WTC11 (cell line): ENCODE measurements at regions of chr14 and their contacts with region 1.

Region 1: DNA sequence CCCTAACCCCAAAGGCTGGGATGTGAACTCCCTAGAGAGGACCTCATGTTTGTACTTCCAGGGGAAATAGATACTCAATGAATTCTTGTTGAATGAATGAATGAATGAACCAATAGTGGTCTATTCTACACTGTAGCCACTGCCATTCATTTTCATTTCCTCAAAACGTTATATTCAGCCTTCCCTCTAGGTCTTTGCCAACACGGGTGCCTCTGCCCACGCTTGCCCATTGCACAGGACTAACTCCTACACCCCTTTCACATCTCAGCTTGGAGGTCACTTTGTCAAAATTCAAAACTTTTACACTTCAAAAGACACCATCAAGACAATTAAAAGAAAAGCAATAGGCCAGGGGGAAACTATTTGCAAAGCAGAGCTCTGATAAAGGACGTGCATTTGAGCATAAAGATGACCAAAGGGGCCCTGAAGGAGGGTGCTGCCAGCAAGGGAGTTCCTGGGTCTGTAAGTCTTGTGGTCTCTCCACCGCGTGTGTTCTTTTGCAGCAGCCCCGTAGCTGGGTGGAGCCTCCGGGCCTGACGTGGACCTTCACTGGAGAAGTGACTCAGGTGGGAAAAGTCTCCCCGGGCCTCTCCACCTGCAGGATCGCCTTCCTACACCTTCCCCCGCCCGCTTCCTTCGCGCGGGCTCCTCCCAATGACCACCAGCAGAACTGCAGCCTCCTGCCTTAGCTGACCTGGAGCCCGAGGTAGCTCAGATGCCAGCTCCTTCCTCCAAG is 31.5 kb downstream of the TMEM63C start:
- DNase-seq: peak; percentile 87
- ATAC-seq: peak; percentile 98
- H3K4me3 Mint-ChIP-seq: no peak overlapping the region
- H3K27ac Mint-ChIP-seq: no peak overlapping the region
- H3K4me1 Mint-ChIP-seq: peaks cover 17% of the 10 kb centered on the region
- H3K27me3 Mint-ChIP-seq: peaks cover 3% of the 10 kb centered on the region; the same call in 1 of the 2 replicates
- CTCF ChIP-seq: peak; percentile 60; the same call in 1 of the 2 replicates

Region 2: DNA sequence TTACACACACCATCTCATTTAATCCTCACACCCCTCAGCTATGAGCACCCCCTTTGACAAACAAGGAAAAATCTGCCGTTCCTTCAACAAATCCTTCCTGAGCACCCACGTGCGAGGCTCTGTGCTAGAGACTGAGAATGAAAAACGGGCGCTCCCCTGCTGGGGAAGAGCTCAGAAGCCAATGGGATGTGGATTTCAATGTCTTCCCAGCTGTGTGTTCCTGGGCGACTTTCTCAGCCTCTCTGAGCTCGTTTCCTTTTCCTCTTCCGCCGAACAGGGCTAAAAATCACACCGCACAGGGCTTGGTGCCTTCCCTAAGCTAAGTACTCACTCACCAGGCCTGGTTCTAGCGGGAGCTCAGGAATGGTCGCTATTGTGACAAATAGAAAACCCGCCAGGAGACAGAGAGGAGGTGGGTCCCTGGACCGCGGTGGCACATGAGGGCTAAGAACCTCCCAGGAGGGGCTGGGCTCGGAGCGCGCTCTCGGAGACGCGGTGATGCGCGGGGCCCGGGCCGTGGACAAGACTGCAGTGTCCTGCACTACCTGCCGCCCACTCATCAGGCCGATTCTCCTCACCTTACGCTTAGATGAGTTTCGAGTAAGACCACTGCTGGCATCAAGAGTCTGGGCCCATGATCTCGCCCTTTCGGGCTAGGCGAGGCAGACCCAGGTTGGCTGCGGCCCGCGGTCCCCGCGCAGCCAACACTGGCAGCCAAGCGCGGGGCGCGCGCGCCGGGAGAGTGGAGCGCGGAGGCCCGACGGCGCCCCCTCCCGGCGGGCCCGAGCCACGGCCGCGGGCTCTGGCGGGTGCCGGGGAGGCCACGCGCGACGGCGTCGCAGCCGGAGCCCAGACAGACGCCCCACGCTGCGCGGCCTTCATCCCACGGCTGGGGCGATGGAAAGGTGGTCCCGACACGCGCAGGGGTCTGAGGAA is 88.5 kb before region 1 on chr14:
- CTCF ChIA-PET with region 1: interaction called, 24 read pairs
- POLR2A ChIA-PET with region 1: no interaction called
- DNase-seq: peak; percentile 54
- ATAC-seq: peak; percentile 43
- H3K4me3 Mint-ChIP-seq: peak overlapping the region; percentile 72
- H3K27ac Mint-ChIP-seq: no peak overlapping the region
- H3K4me1 Mint-ChIP-seq: peaks cover 62% of the 10 kb centered on the region
- H3K27me3 Mint-ChIP-seq: peaks cover 7% of the 10 kb centered on the region
- CTCF ChIP-seq: peak; percentile 63; the same call in 1 of the 2 replicates

Region 3: DNA sequence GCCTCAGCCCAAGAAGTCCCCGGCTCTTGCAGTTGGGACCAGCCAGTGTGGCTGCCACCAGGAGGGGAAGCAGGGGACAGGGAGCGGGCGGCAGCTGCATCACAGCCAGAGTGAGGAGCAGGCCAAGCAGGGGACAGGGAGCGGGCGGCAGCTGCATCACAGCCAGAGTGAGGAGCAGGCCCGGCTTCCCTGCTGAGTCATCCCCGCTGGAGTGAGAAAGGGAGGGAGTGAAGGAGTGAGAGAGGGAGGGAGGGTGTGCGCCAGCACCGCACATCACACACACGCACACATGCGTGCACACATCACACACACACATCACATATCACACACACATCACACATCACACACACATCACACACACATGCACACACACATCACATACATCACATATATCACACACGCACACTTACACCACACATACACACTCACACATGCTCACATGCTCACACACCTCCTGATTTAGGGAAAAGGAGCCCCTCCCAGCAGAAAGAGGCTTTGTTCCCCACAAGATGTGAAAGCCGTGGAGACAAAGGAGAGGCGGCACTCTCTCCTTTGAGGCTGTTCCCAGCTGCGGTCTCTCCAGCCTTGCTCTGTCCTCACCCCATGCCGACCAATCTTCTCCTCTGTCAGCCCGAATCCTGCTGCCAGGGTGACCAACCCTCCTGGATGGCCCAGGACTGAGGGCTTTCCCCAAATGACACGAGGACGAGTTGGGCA is 54.8 kb before region 1 on chr14:
- CTCF ChIA-PET with region 1: interaction called, 78 read pairs
- POLR2A ChIA-PET with region 1: no interaction called
- DNase-seq: peak; percentile 39
- ATAC-seq: peak; percentile 82
- H3K4me3 Mint-ChIP-seq: peak overlapping the region; percentile 34; the same call in 1 of the 2 replicates
- H3K27ac Mint-ChIP-seq: no peak overlapping the region
- H3K4me1 Mint-ChIP-seq: peaks cover 33% of the 10 kb centered on the region
- H3K27me3 Mint-ChIP-seq: no peaks in the 10 kb centered on the region
- CTCF ChIP-seq: no peak

Region 4: GRCh38 chr14:77186911-77187648 is 26.0 kb before region 1 on chr14:
- CTCF ChIA-PET with region 1: interaction called, 19 read pairs
- POLR2A ChIA-PET with region 1: interaction called, 3 read pairs
- DNase-seq: peak; percentile 35
- ATAC-seq: peak; percentile 60
- H3K4me3 Mint-ChIP-seq: no peak overlapping the region
- H3K27ac Mint-ChIP-seq: peak overlapping the region; percentile 57; the same call in 1 of the 2 replicates
- H3K4me1 Mint-ChIP-seq: peaks cover 9% of the 10 kb centered on the region
- H3K27me3 Mint-ChIP-seq: peaks cover 9% of the 10 kb centered on the region
- CTCF ChIP-seq: no peak

Region 5: DNA sequence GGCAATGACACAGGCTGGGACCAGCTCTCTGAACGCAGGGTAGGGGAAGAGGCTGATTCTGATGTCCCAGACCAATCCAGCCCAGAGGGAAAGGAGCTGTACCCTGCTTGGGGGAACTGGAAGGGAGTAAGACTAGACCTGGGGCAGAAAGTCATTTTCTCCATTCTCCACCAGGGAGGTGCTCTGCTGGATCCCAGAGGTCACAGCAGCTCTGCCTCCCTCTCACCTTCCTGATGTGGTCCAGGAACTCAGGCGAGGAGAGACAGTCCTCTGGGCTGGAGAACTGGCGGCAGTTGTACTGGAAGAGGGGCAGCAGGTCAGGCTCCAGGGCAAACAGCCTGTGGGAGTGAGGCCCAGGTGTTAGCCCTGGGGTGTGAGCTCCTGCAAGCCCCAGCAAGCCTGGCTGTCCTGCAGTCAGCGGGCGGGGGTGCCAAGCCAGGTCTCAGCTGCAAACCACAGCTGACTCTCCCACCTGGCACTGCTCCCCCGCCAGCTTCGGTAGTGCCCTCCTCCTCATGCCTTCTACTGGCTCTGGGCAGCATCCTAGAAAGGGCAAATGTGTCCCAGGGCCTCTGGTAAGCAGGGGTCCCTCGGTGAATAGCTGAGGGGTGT is 56.0 kb after region 1 on chr14:
- CTCF ChIA-PET with region 1: interaction called, 18 read pairs
- POLR2A ChIA-PET with region 1: no interaction called
- DNase-seq: no peak
- ATAC-seq: peak; percentile 31
- H3K4me3 Mint-ChIP-seq: no peak overlapping the region; the same call in 1 of the 2 replicates
- H3K27ac Mint-ChIP-seq: no peak overlapping the region
- H3K4me1 Mint-ChIP-seq: peaks cover 8% of the 10 kb centered on the region
- H3K27me3 Mint-ChIP-seq: peaks cover 61% of the 10 kb centered on the region
- CTCF ChIP-seq: no peak